ENCODE measurements at regions of chr11 and their contacts with region 1.

Region 1: DNA sequence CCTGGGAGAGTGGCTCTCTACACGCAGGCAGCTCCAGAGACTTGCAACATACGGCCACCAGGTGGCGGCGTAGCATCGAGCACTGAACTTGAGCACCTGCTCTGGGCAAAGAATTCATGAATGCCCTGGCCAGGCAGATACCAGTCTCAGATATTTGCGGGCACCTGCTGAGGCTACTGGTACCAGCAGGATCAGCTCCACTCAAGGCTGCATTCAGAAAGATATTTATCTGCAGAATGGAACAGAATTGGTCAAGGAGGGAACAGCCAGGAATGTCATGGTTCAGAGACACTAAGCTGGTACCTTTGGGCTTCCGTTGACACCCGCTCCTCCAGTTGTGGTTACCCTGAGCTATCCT is 10.8 kb upstream of the CCDC86 start:
- DNase-seq: peak; percentile 68 to 79 (median 75)
- H3K4me3 ChIP-seq: no peak overlapping the region
- H3K4me3 Mint-ChIP-seq: no peak overlapping the region
- H3K27ac ChIP-seq: no peak overlapping the region
- H3K27ac Mint-ChIP-seq: peak overlapping the region in 1 of 7 donors; percentile 65
- H3K4me1 ChIP-seq: peaks cover 23 to 27% of the 10 kb centered on the region in 2 donors
- H3K4me1 Mint-ChIP-seq: peaks cover 26% of the 10 kb centered on the region
- H3K27me3 ChIP-seq: peaks cover 0 to 2% of the 10 kb centered on the region in 2 donors
- H3K27me3 Mint-ChIP-seq: peaks cover 2 to 5% (median 3%) of the 10 kb centered on the region in 3 donors
- CTCF ChIP-seq: peak; percentile 91

Region 2: DNA sequence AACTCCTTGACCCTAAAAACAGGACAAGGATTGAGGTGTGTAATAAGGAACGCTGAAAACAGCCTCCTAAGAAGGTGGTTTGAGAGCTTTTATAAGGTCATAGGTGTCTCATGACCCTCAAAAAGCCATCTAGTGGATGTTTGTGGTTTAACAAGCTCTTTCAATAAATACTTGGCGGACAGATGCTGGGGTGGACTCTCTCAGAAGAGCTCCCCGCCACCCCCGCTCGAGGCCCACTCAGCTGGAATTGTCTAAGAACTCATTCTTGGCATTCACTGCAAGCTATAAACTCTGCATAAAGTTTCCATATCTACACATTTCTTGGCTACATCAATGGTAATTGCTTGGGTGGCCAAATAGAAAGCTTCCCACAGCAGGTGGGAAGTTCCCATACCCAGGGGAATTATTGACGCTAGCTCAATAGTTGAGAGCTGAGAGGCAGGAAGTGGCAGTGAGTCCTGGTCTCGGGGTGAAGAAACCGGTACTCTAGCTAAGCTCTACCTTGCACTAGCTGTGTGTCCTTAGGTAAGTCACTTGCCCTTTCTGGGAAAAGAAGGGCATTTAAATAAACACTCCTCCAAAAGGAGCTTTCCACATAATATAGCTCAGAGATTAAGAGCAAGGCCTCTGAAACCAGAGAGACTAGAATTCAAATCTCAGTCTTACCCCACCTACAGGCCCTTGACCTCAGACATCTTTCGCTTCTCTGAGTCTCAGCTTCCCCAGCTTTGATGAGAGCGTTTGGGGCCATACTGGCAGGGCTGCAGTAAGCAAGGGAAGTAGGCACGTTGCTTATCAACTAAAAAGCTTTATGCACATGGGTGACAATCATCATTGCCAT is 68.1 kb before region 1 on chr11:
- intact Hi-C with region 1: no loop called
- DNase-seq: no peak
- H3K4me3 ChIP-seq: no peak overlapping the region
- H3K4me3 Mint-ChIP-seq: no peak overlapping the region
- H3K27ac ChIP-seq: no peak overlapping the region
- H3K27ac Mint-ChIP-seq: no peak overlapping the region
- H3K4me1 ChIP-seq: peaks cover 12% of the 10 kb centered on the region in 2 donors
- H3K4me1 Mint-ChIP-seq: peaks cover 21% of the 10 kb centered on the region
- H3K27me3 ChIP-seq: peaks cover 2 to 6% of the 10 kb centered on the region in 2 donors
- H3K27me3 Mint-ChIP-seq: peaks cover 8 to 32% (median 9%) of the 10 kb centered on the region in 3 donors
- CTCF ChIP-seq: peak; percentile 34

Region 3: GRCh38 chr11:60788401-60789125 is 42.6 kb before region 1 on chr11:
- intact Hi-C with region 1: no loop called
- DNase-seq: no peak
- H3K4me3 ChIP-seq: no peak overlapping the region
- H3K4me3 Mint-ChIP-seq: no peak overlapping the region
- H3K27ac ChIP-seq: no peak overlapping the region
- H3K27ac Mint-ChIP-seq: no peak overlapping the region
- H3K4me1 ChIP-seq: no peaks in the 10 kb centered on the region
- H3K4me1 Mint-ChIP-seq: no peaks in the 10 kb centered on the region
- H3K27me3 ChIP-seq: no peaks in the 10 kb centered on the region
- H3K27me3 Mint-ChIP-seq: peaks cover 0 to 7% (median 4%) of the 10 kb centered on the region in 3 donors
- CTCF ChIP-seq: no peak

Region 4: GRCh38 chr11:60875366-60876167 is 44.4 kb after region 1 on chr11:
- intact Hi-C with region 1: no loop called
- DNase-seq: no peak
- H3K4me3 ChIP-seq: no peak overlapping the region
- H3K4me3 Mint-ChIP-seq: no peak overlapping the region
- H3K27ac ChIP-seq: no peak overlapping the region
- H3K27ac Mint-ChIP-seq: peak overlapping the region in 1 of 7 donors; percentile 77
- H3K4me1 ChIP-seq: peaks cover 11 to 15% of the 10 kb centered on the region in 2 donors
- H3K4me1 Mint-ChIP-seq: peaks cover 12% of the 10 kb centered on the region
- H3K27me3 ChIP-seq: no peaks in the 10 kb centered on the region
- H3K27me3 Mint-ChIP-seq: peaks cover 0 to 2% (median 1%) of the 10 kb centered on the region in 3 donors
- CTCF ChIP-seq: no peak

Region 5: DNA sequence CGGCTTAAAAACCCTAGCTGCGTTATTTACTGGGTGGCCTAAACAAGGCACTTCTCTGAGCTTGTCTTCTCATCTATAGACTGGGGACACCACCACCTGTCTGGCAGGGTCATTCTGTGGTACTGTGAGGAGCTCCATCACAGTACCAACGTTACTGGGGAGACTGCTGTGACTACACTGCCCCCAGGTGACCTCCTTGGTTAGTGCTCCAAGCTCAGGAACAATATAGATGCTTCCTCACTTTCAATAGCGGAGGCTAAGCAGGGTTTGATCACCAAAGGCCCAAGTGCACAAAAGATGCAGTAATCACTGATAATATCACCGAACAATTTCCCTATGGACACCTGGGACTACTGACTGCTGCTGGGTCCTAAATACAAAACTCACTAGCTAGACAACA is 56.4 kb after region 1 on chr11:
- intact Hi-C with region 1: loop called (anchors 1 to 5 kb)
- DNase-seq: peak; percentile 33 to 54 (median 52)
- H3K4me3 ChIP-seq: no peak overlapping the region
- H3K4me3 Mint-ChIP-seq: no peak overlapping the region
- H3K27ac ChIP-seq: no peak overlapping the region
- H3K27ac Mint-ChIP-seq: no peak overlapping the region
- H3K4me1 ChIP-seq: peaks cover 11 to 12% of the 10 kb centered on the region in 2 donors
- H3K4me1 Mint-ChIP-seq: peaks cover 24% of the 10 kb centered on the region
- H3K27me3 ChIP-seq: no peaks in the 10 kb centered on the region
- H3K27me3 Mint-ChIP-seq: no peaks in the 10 kb centered on the region
- CTCF ChIP-seq: peak; percentile 65

Region 6: DNA sequence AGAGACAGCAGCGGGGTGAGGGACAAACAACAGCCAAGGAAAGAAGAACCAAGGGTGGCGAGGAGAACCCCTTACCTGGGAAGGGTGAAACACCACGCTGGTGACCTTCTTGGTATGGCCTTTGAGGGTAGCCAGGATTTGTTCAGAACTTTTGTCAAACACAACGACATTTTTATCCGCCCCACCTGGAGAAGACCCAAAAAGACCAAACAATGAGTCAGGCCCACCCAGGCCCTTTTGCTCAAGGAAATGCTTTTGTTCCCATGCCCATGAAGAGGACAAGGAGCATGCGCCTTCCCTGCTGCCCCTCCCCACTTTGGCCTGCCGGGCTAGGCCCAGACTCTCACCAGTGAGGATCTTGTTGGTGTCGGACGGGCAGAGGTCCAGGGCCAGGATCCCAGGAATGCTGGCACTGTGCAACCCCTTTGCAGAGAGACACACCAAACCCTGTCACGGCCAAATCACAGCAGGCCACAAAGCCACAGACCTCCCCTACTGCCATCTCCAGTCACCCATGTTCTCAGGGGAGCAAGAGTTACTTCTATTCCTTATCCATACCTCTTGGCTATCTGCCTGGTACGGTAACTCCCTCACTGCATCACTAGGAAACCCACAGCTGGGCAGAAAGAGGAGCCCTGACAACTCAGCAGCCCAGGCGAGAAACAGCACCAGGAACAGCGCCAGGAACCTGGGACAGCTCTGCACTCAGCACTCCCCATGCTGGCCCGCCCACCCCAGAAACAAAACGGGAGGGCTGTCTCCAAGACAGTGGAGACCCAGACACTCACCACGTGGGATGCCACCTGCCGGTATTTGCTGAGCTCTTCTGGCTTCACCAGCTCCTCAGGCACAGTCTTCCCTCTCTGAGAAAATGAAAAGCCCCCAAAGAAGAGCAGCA is 69.6 kb after region 1 on chr11:
- intact Hi-C with region 1: loop called in 1 of 2 experiments (anchors 2 kb)
- DNase-seq: no peak
- H3K4me3 ChIP-seq: no peak overlapping the region
- H3K4me3 Mint-ChIP-seq: no peak overlapping the region
- H3K27ac ChIP-seq: no peak overlapping the region
- H3K27ac Mint-ChIP-seq: peak overlapping the region in 3 of 7 donors; percentile 38 to 70 (median 46)
- H3K4me1 ChIP-seq: peaks cover 13 to 15% of the 10 kb centered on the region in 2 donors
- H3K4me1 Mint-ChIP-seq: peaks cover 22% of the 10 kb centered on the region
- H3K27me3 ChIP-seq: no peaks in the 10 kb centered on the region
- H3K27me3 Mint-ChIP-seq: peaks cover 0 to 2% (median 0%) of the 10 kb centered on the region in 3 donors
- CTCF ChIP-seq: no peak